ENCODE measurements at regions of chr3 and their contacts with region 1.

Region 1: GRCh38 chr3:185149591-185149990 is 3.3 kb downstream of the C3orf70 start:
- DNase-seq: no peak
- ATAC-seq: no peak
- H3K4me3 ChIP-seq: no peak overlapping the region
- H3K27ac ChIP-seq: no peak overlapping the region
- H3K4me1 ChIP-seq: no peaks in the 10 kb centered on the region
- H3K27me3 ChIP-seq: peaks cover 96% of the 10 kb centered on the region
- CTCF ChIP-seq: no peak

Region 2: DNA sequence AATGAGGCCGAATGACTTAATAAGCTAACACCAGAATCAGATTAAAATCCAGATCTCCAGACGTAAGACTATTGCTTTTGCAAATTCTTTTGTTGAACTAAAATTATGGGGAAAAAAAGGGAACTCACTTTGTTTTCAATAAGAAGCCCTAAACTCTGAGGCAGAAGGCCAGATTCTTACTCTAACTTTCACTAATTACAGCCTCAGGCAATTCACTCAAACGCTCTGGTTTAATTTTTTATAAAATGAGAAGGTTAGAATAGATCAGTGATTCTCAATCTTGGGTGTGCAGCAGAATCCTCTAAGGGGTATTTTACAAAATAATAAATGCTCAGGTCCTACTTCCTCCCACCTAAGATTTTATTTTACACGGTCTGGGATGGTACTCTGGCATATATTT is 34.8 kb before region 1 on chr3:
- CTCF ChIA-PET with region 1: no interaction called
- POLR2A ChIA-PET with region 1: no interaction called
- intact Hi-C with region 1: loop called (anchors 5 kb)
- DNase-seq: no peak
- ATAC-seq: no peak
- H3K4me3 ChIP-seq: no peak overlapping the region
- H3K27ac ChIP-seq: no peak overlapping the region
- H3K4me1 ChIP-seq: no peaks in the 10 kb centered on the region
- H3K27me3 ChIP-seq: peaks cover 96% of the 10 kb centered on the region
- CTCF ChIP-seq: no peak

Measured in PC-3 (cell line).